ENCODE measurements at regions of chr5 and their contacts with region 1.

Region 1: GRCh38 chr5:132272311-132273210 is 15.1 kb downstream of the PDLIM4 start:
- DNase-seq: peak; percentile 82
- H3K4me3 Mint-ChIP-seq: no peak overlapping the region
- H3K27ac Mint-ChIP-seq: no peak overlapping the region
- H3K4me1 Mint-ChIP-seq: peaks cover 12% of the 10 kb centered on the region
- H3K27me3 Mint-ChIP-seq: peaks cover 20% of the 10 kb centered on the region

Region 2: GRCh38 chr5:132142459-132142858 is 130.1 kb before region 1 on chr5:
- CTCF ChIA-PET with region 1: no interaction called
- intact Hi-C with region 1: no loop called
- DNase-seq: no peak
- H3K4me3 Mint-ChIP-seq: no peak overlapping the region
- H3K27ac Mint-ChIP-seq: no peak overlapping the region
- H3K4me1 Mint-ChIP-seq: no peaks in the 10 kb centered on the region
- H3K27me3 Mint-ChIP-seq: peaks cover 20% of the 10 kb centered on the region

Region 3: DNA sequence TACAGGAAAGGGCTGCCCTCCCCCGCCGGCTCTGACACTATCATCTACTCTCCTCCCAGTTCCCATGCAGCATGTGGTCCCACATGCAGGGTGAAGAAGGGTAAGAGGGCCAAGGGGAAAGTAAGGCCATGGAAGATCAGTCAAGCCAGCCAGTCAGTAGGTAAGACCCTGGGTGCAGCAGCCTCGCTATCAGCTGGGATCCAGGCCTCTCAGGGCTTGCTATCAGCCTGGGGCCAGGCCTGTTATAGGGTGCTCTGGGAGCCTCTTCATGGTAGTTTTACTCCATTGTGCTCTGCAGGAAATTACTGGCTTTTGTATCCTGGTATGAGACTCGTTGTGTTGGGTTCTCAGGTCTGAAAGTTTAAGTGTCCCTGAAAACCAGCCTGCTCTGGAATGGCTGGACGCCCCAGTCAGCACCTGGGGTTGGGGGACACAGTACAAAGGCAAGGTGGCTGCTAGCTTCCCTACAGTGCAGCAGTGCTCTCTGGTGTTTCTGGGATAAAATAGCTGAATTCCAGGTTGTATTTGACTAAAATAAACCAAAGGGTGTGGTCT is 43.0 kb after region 1 on chr5:
- CTCF ChIA-PET with region 1: interaction called, 8 read pairs
- intact Hi-C with region 1: loop called (anchors 2 kb)
- DNase-seq: no peak
- H3K4me3 Mint-ChIP-seq: no peak overlapping the region
- H3K27ac Mint-ChIP-seq: no peak overlapping the region
- H3K4me1 Mint-ChIP-seq: no peaks in the 10 kb centered on the region
- H3K27me3 Mint-ChIP-seq: no peaks in the 10 kb centered on the region

Region 4: DNA sequence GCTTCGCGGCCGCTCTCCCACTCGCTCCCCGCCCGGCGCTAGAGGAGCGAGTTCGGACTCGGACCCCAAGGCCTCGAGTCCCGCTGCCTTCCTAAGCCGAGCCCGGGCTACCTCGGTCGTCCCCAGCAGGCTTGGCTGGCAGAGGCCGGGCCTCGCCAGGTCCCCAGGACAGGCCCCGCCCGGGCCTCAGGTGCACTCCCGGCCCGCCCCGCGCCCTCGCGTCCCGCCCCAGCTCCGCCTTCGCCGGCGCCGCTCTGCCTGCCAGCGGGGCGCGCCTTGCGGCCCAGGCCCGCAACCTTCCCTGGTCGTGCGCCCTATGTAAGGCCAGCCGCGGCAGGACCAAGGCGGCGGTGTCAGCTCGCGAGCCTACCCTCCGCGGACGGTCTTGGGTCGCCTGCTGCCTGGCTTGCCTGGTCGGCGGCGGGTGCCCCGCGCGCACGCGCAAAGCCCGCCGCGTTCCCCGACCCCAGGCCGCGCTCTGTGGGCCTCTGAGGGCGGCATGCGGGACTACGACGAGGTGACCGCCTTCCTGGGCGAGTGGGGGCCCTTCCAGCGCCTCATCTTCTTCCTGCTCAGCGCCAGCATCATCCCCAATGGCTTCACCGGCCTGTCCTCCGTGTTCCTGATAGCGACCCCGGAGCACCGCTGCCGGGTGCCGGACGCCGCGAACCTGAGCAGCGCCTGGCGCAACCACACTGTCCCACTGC is 97.1 kb after region 1 on chr5 and contains the start of gene SLC22A5:
- CTCF ChIA-PET with region 1: interaction called, 11 read pairs
- intact Hi-C with region 1: loop called (anchors 1 kb)
- DNase-seq: peak; percentile 72
- H3K4me3 Mint-ChIP-seq: peak within 1 kb of the TSS; percentile 77
- H3K27ac Mint-ChIP-seq: peak within 1 kb of the TSS; percentile 68
- H3K4me1 Mint-ChIP-seq: peaks cover 22% of the 10 kb centered on the region
- H3K27me3 Mint-ChIP-seq: no peaks in the 10 kb centered on the region
- total RNA-seq, gene SLC22A5: 3.1 to 3.6 TPM

Measured in activated naive CD4-positive, alpha-beta T cell treated with anti-CD3 and anti-CD28 coated beads for 36 hours (primary cell).